CD8-positive, alpha-beta T cell (primary cell): ENCODE measurements at regions of chr2 and their contacts with region 1.

Region 1: GRCh38 chr2:120252225-120253021 is at the start of gene RALB:
- DNase-seq: peak; percentile 96 to 99 (median 98)
- ATAC-seq: peak; percentile 95
- H3K4me3 ChIP-seq: peak within 1 kb of the TSS; percentile 87 to 100
- H3K4me3 Mint-ChIP-seq: peak within 1 kb of the TSS; percentile 99
- H3K27ac ChIP-seq: peak within 1 kb of the TSS; percentile 63 to 85
- H3K27ac Mint-ChIP-seq: peak within 1 kb of the TSS; percentile 94
- H3K4me1 ChIP-seq: peaks cover 18% of the 10 kb centered on the region
- H3K4me1 Mint-ChIP-seq: peaks cover 34% of the 10 kb centered on the region
- H3K27me3 ChIP-seq: no peaks in the 10 kb centered on the region
- H3K27me3 Mint-ChIP-seq: peaks cover 5% of the 10 kb centered on the region
- CTCF ChIP-seq: no peak
- total RNA-seq, gene RALB: 3.1 to 3.2 TPM

Region 2: DNA sequence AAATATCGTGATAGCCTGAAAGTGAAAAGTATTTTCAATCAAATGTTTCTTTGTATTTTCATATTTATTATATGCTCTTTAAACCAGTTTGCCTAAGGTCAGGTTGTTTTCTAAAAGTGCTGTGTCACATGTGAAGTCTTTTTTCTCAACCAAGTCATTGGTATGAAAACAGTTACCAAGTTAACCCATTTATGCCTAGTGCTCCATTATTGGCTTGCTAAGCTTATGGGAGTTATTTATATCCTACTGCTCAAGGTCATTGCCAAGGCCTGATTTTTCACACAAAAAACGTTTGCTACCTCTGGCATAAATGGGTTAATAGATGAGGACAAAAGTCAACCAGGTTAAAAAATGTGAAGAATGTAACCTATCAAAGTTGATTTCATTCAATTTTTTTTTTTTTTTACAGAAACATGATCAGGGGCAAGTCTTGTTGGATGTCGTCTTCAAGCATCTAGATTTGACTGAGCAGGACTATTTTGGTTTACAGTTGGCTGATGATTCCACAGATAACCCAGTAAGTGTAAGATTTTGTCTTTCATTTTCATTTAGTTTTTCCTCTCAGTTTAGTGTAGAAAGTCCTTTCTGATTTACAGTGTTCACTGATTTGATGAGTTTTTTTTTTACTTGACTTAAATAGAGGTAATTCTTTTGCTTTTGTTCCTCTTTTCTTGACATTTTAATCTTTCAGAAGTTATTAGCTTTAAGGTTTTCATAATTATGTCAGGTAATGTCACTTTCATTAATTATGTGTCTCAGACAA is 390.1 kb before region 1 on chr2:
- CTCF ChIA-PET with region 1: no interaction called
- POLR2A ChIA-PET with region 1: no interaction called
- intact Hi-C with region 1: no loop called
- DNase-seq: peak in 2 of 9 experiments; percentile 16 to 48
- ATAC-seq: no peak
- H3K4me3 ChIP-seq: no peak overlapping the region
- H3K4me3 Mint-ChIP-seq: no peak overlapping the region
- H3K27ac ChIP-seq: peak overlapping the region in 1 of 2 experiments; percentile 20
- H3K27ac Mint-ChIP-seq: peak overlapping the region; percentile 57
- H3K4me1 ChIP-seq: peaks cover 16% of the 10 kb centered on the region
- H3K4me1 Mint-ChIP-seq: peaks cover 80% of the 10 kb centered on the region
- H3K27me3 ChIP-seq: no peaks in the 10 kb centered on the region
- H3K27me3 Mint-ChIP-seq: no peaks in the 10 kb centered on the region
- CTCF ChIP-seq: no peak

Region 3: GRCh38 chr2:120223034-120223912 is 29.1 kb before region 1 on chr2 and contains the start of gene TMEM185B:
- CTCF ChIA-PET with region 1: interaction called, 5 read pairs
- POLR2A ChIA-PET with region 1: interaction called, 7 read pairs
- intact Hi-C with region 1: loop called (anchors 1 to 2 kb)
- DNase-seq: peak; percentile 81 to 91 (median 87)
- ATAC-seq: peak; percentile 95
- H3K4me3 ChIP-seq: peak within 1 kb of the TSS; percentile 80 to 87
- H3K4me3 Mint-ChIP-seq: peak within 1 kb of the TSS; percentile 87
- H3K27ac ChIP-seq: peak within 1 kb of the TSS; percentile 90 to 95
- H3K27ac Mint-ChIP-seq: peak within 1 kb of the TSS; percentile 93
- H3K4me1 ChIP-seq: peaks cover 36% of the 10 kb centered on the region
- H3K4me1 Mint-ChIP-seq: peaks cover 60% of the 10 kb centered on the region
- H3K27me3 ChIP-seq: no peaks in the 10 kb centered on the region
- H3K27me3 Mint-ChIP-seq: no peaks in the 10 kb centered on the region
- CTCF ChIP-seq: no peak
- total RNA-seq, gene TMEM185B: 21.3 to 23.5 TPM

Region 4: DNA sequence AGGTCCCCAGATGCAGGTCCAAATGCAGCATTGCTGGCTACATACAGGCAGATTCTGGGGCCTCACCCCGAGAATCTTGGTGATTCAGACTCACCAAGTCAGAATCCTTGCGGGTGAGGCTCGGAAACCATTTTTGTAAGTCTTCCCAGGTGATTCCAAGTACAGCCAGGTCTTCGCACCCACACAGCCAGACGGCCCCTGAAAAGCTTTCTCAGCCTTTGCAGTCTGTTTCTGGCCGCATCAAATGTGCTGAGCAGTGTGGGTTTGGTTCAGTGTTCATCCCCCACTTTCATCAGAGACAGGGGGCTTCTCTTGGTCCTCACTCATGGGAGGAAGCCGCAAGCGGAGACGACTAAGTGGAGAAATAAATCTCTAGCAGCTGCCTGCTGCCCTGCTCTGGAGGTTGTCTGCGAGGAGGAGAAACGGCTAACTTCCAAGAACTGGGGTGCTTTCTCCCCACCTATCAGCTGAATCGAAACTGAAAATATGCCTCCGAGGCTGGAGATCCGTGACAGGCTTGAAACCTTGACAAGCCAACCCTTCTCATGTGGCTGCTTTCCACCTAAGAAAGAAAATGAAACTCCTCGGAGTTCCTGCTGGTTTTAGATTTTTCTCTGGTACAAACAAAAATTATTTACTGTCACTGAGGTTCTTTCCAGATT is 20.3 kb before region 1 on chr2:
- CTCF ChIA-PET with region 1: interaction called, 5 read pairs
- POLR2A ChIA-PET with region 1: interaction called, 14 read pairs
- intact Hi-C with region 1: loop called (anchors 1 kb)
- DNase-seq: peak; percentile 27 to 90 (median 64)
- ATAC-seq: peak; percentile 91
- H3K4me3 ChIP-seq: peak overlapping the region; percentile 59 to 66
- H3K4me3 Mint-ChIP-seq: peak overlapping the region; percentile 93
- H3K27ac ChIP-seq: peak overlapping the region; percentile 60 to 84
- H3K27ac Mint-ChIP-seq: peak overlapping the region; percentile 92
- H3K4me1 ChIP-seq: peaks cover 39% of the 10 kb centered on the region
- H3K4me1 Mint-ChIP-seq: peaks cover 57% of the 10 kb centered on the region
- H3K27me3 ChIP-seq: no peaks in the 10 kb centered on the region
- H3K27me3 Mint-ChIP-seq: no peaks in the 10 kb centered on the region
- CTCF ChIP-seq: no peak

Region 5: GRCh38 chr2:121128754-121129659 is 876.6 kb after region 1 on chr2:
- CTCF ChIA-PET with region 1: no interaction called
- POLR2A ChIA-PET with region 1: no interaction called
- intact Hi-C with region 1: no loop called
- DNase-seq: no peak
- ATAC-seq: no peak
- H3K4me3 ChIP-seq: no peak overlapping the region
- H3K4me3 Mint-ChIP-seq: no peak overlapping the region
- H3K27ac ChIP-seq: no peak overlapping the region
- H3K27ac Mint-ChIP-seq: no peak overlapping the region
- H3K4me1 ChIP-seq: no peaks in the 10 kb centered on the region
- H3K4me1 Mint-ChIP-seq: no peaks in the 10 kb centered on the region
- H3K27me3 ChIP-seq: peaks cover 0 to under 1% of the 10 kb centered on the region in 2 experiments
- H3K27me3 Mint-ChIP-seq: peaks cover 1% of the 10 kb centered on the region
- CTCF ChIP-seq: no peak